Head of caudate nucleus (tissue), 42 donors: ENCODE measurements at regions of chr18 and their contacts with region 1.

Region 1: GRCh38 chr18:23131693-23132319 is 3.5 kb upstream of the CABLES1 start:
- DNase-seq: peak in 30 of 42 donors; percentile 31 to 88 (median 68)

Region 2: GRCh38 chr18:22831441-22831904 is 300.3 kb before region 1 on chr18:
- intact Hi-C with region 1: no loop called
- DNase-seq: peak in 3 of 42 donors; percentile 18 to 36 (median 30)

Region 3: GRCh38 chr18:23377669-23378301 is 246.0 kb after region 1 on chr18:
- intact Hi-C with region 1: loop called (anchors 10 kb)
- DNase-seq: peak in 1 of 42 donors; percentile 8

Region 4: DNA sequence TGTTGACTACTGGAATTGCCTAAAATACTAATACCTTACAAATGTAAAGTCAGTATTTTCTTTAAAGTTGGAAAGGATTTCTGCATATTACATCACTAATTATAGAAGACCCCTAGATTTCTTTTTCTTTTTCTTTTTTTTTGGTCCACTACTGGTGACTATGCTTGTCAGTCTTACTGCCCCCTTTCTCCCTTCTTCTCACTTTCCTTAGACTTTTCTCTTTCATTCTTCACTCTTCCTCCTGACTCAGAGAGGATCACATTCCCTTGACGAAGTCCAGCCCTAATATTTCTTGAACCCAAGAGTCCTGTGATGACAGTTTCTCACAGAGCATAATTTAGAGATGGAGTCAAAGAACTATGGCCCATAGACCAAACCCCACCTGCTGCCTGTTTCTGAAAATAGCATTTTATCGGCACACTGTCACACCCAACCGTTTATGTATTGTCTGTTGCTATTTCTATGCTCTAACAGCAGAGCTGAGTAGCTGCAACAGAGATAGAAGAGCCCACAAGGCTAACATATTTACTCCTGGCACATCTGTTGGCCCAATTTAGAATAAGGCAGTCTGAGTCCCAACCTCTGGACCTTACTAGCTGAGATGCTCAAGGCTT is 280.7 kb after region 1 on chr18:
- intact Hi-C with region 1: loop called (anchors 5 kb)
- DNase-seq: no peak